ENCODE measurements at regions of chr7 and their contacts with region 1.

Region 1: GRCh38 chr7:44921607-44922359 is 36.5 kb upstream of the PURB start:
- DNase-seq: peak; percentile 87 to 96 (median 94)
- H3K4me3 ChIP-seq: no peak overlapping the region
- H3K27ac ChIP-seq: no peak overlapping the region
- H3K4me1 ChIP-seq: no peaks in the 10 kb centered on the region
- H3K27me3 ChIP-seq: no peaks in the 10 kb centered on the region
- CTCF ChIP-seq: peak; percentile 76 to 97 (median 86)
- POLR2A ChIP-seq: no peak

Region 2: GRCh38 chr7:44587843-44588711 is 333.7 kb before region 1 on chr7:
- intact Hi-C with region 1: loop called in 1 of 2 experiments (anchors 5 kb)
- DNase-seq: peak; percentile 51 to 81 (median 64)
- H3K4me3 ChIP-seq: no peak overlapping the region
- H3K27ac ChIP-seq: no peak overlapping the region
- H3K4me1 ChIP-seq: peaks cover 0 to under 1% of the 10 kb centered on the region in 2 donors
- H3K27me3 ChIP-seq: no peaks in the 10 kb centered on the region
- CTCF ChIP-seq: peak; percentile 46 to 79 (median 67)
- POLR2A ChIP-seq: no peak

Region 3: DNA sequence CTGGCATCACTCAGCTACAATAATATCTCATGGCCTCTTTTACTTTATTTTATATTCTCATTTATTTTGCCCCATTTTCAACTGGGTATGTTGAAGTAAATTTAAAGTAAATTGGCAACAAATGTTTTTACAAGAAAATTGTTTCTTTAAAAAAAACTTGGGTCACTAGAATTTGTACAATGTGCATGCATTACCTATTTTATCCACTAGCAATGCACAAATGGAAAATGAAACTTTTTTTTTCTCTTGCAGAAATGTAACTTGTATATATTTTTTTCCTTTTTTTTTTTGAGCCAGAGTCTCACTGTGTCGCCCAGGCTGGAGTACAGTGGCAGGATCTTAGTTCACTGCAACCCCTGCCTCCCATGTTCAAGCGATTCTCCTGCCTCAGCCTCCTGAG is 63.6 kb before region 1 on chr7:
- intact Hi-C with region 1: loop called (anchors 2 to 5 kb)
- DNase-seq: no peak
- H3K4me3 ChIP-seq: no peak overlapping the region
- H3K27ac ChIP-seq: no peak overlapping the region
- H3K4me1 ChIP-seq: no peaks in the 10 kb centered on the region
- H3K27me3 ChIP-seq: no peaks in the 10 kb centered on the region
- CTCF ChIP-seq: peak in 4 of 6 experiments; percentile 7 to 23 (median 18)
- POLR2A ChIP-seq: no peak

Region 4: DNA sequence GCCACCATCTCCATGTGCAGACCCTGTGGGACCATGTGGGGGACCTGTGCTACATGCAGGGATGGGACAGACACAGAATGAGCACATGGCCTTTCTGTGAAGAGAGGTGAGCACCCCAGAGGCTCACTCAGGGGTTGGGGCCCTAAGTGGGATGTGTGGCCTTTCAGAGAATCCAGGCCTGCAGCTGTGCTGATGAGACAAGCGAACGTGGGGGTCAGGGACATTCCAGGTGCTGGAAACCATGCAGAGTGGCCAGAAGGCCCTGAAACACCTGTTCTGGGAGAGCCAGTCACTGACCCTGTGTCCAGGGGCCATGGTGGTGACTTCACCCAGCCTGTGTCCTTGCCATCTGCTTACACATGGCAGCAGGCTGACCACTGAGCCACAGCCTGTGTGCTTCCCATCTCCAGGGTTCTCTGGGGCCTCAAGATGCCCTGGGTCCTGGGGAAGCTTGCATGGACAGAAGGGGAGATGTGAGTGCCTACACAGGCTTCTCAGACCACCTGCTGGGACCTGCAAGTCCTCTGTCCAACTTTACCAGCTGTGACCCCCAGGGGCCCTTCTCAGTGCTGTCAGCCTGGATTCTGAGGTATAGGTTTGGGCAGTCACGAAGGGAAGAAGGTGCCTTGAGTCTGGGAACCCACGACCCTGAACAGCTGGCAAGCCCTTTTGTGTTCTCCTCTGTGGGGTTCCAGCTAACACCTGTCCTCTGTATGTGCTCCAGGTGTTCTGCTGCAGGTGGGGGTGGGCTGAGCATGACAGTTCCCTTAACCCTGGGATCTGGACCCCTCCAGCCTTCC is 253.4 kb after region 1 on chr7:
- intact Hi-C with region 1: no loop called
- DNase-seq: peak in 1 of 7 donors; percentile 11
- H3K4me3 ChIP-seq: no peak overlapping the region
- H3K27ac ChIP-seq: no peak overlapping the region
- H3K4me1 ChIP-seq: no peaks in the 10 kb centered on the region
- H3K27me3 ChIP-seq: no peaks in the 10 kb centered on the region
- CTCF ChIP-seq: no peak
- POLR2A ChIP-seq: no peak